ENCODE measurements at regions of chr21 and their contacts with region 1.

Region 1: DNA sequence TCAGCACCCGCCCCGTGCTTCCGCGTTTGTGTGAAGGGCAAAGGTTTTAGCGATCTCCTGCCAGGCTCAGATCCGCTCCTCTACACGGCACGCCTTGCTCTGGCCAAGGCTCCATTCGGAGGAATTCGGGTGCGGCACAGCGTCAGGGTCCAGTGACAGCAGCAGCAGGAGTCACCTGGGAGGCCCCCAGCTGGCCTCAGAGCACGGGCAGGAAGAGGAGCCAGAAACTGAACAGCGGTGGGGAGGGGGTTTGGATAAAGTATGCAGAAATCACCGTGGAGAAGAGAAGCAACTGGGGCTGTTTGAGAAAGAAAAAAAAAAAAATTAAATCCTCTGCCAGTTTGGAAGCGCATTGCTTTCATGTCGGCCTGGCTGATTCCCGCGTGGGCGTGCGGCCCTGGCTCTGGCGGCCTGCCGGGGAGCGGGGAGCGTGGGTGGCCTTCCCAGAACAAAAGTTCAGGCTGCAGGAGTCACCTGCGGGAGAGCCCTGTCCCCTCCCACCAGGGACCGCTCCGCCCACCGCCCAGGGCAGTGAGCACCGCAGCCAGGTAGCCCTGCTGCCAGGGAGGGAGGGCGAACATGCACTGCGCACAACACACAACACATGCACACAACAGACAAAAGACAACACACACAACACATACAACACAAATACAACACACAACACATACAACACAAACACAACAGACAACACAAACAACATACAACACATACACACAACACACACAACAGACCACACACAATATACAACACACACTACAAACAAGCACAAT is 107.6 kb downstream of the ETS2 start:
- DNase-seq: peak; percentile 75
- ATAC-seq: peak; percentile 76

Region 2: DNA sequence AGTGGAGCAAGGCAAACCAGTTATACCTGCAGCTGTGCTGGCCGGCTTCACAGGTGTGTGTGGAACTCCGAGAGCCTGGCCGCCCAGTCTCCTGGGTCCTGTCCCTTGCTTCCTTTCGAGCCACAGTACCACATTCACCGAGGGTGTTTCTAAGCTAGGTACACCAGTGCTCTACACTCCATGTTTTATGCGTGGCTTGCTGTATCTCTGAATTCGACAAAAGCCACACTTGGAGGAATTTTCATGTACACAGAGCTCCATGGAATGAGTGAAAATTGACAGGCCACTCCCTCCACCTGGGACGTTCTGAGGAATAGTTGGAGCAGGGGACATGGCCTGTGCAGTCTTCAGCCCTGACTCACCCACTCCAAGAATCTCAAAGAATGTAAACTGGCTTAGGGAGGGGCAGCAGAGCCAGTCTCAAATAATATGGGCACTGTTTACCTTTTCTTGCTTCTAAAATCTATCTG is 93.6 kb before region 1 on chr21:
- intact Hi-C with region 1: loop called (anchors 5 kb)
- DNase-seq: no peak
- ATAC-seq: no peak

Region 3: GRCh38 chr21:39004634-39005501 is 91.6 kb after region 1 on chr21:
- intact Hi-C with region 1: loop called (anchors 5 kb)
- DNase-seq: peak; percentile 83
- ATAC-seq: peak; percentile 71

Region 4: DNA sequence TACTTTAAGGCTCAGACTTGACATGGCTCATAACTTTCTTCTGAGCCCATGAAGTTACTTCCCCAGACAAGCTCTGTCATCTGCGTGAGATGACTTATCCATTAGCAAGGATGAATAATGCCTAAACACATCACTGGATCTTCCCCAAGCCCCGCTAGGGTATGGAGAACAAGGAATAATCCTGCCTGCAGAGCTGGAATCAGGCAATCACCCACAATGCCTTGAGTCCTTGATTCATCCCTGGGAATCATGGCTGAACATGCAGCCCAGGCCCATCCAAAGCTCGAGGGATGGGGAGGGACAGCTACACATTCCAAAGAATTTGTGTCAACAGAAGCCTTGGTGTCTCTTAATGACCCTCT is 138.3 kb after region 1 on chr21:
- intact Hi-C with region 1: no loop called
- DNase-seq: no peak
- ATAC-seq: no peak

Region 5: DNA sequence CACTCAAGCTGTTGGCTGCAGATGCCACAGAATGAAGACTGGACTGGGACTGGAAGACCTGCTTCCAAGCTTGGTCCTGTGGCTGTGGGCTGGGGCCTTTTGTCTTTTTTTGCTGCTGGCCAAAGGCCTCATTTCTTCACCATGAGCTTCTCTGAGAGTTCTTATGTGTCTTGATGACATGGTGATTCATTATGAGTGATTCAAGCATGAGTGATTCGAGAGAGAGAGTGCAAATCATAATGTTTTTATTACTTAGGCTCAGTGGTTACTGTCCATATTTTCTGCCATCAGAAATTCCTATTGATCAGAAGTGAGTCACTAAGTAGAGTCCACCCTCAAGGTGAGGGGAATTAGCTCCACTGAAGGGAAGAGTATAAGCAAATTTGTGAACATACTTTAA is 1047.9 kb after region 1 on chr21:
- intact Hi-C with region 1: no loop called
- DNase-seq: no peak
- ATAC-seq: no peak